Activated CD8-positive, alpha-beta T cell treated with anti-CD3 and anti-CD28 coated beads for 36 hours (primary cell): ENCODE measurements at regions of chr7 and their contacts with region 1.

Region 1: GRCh38 chr7:30974605-30975255 is 11.0 kb downstream of the GHRHR start:
- DNase-seq: peak; percentile 84
- ATAC-seq: peak; percentile 97
- H3K4me3 Mint-ChIP-seq: no peak overlapping the region
- H3K27ac Mint-ChIP-seq: peak overlapping the region; percentile 18
- H3K4me1 Mint-ChIP-seq: no peaks in the 10 kb centered on the region
- H3K27me3 Mint-ChIP-seq: peaks cover 19% of the 10 kb centered on the region
- CTCF ChIP-seq: peak; percentile 71

Region 2: DNA sequence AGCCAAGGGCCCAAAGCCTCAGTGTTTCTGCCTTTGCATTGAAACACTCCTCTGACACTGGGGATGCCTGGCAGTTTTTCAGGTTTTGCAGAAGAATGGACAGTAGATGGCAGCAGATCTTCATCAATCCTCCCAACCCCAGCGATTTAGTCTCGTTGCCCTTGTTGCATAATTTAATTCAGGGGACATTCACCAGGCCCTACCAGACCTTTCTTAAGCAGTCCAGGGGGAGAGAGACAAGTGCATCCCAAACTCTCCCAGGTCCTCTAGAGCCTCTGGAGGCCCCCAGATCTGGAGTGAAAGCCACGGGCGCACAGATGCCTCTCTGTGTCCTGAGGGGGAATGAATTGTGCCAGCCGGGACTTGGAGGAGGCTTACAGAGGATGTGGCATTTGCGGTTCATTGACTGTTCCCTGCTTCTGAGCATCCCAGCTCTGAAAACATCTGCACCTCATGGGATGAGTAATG is 173.9 kb before region 1 on chr7:
- CTCF ChIA-PET with region 1: interaction called, 3 read pairs
- POLR2A ChIA-PET with region 1: no interaction called
- intact Hi-C with region 1: loop called (anchors 5 kb)
- DNase-seq: peak; percentile 46
- ATAC-seq: peak; percentile 49
- H3K4me3 Mint-ChIP-seq: no peak overlapping the region
- H3K27ac Mint-ChIP-seq: no peak overlapping the region
- H3K4me1 Mint-ChIP-seq: peaks cover 10% of the 10 kb centered on the region
- H3K27me3 Mint-ChIP-seq: no peaks in the 10 kb centered on the region
- CTCF ChIP-seq: peak; percentile 60

Region 3: DNA sequence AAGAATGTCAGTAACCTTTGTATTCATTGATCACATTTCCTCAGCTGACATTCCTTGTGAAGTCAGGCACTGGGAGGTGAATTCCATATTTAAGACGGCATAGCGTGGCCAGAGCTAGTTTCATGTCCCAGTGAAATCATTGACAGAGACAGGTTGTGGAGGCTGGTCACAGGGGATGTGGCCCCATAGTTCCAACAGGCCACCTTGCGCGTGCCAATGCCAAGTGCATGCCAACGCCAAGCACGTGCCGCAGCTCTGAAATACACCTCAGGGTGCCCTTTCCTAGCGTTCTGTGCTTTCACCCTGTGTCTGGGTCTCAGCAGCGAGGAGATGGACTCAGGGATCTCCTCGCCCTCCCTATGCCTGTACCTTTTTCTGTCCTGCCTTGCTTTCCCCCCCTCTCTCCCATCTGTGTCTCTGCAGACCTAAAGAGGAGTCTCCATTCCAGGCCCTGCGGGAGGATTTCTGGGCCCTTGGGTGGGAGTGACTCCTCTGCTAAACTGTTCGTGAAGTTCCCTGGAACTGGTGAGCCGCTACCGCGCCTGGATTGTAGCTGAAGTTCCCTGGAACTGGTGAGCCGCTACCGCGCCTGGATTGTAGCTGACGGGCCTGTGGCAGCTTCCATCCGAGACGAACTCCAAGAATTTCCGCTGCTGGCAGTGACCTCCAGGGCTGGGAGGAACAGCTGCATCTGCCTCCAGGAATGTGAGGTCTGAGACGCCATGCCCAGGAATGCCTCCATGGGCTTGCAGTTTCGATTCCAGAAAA is 43.4 kb before region 1 on chr7:
- CTCF ChIA-PET with region 1: no interaction called
- POLR2A ChIA-PET with region 1: no interaction called
- intact Hi-C with region 1: no loop called
- DNase-seq: no peak
- ATAC-seq: no peak
- H3K4me3 Mint-ChIP-seq: no peak overlapping the region
- H3K27ac Mint-ChIP-seq: no peak overlapping the region
- H3K4me1 Mint-ChIP-seq: no peaks in the 10 kb centered on the region
- H3K27me3 Mint-ChIP-seq: no peaks in the 10 kb centered on the region
- CTCF ChIP-seq: no peak